Caki2 (cell line): ENCODE measurements at regions of chr11 and their contacts with region 1.

Region 1: DNA sequence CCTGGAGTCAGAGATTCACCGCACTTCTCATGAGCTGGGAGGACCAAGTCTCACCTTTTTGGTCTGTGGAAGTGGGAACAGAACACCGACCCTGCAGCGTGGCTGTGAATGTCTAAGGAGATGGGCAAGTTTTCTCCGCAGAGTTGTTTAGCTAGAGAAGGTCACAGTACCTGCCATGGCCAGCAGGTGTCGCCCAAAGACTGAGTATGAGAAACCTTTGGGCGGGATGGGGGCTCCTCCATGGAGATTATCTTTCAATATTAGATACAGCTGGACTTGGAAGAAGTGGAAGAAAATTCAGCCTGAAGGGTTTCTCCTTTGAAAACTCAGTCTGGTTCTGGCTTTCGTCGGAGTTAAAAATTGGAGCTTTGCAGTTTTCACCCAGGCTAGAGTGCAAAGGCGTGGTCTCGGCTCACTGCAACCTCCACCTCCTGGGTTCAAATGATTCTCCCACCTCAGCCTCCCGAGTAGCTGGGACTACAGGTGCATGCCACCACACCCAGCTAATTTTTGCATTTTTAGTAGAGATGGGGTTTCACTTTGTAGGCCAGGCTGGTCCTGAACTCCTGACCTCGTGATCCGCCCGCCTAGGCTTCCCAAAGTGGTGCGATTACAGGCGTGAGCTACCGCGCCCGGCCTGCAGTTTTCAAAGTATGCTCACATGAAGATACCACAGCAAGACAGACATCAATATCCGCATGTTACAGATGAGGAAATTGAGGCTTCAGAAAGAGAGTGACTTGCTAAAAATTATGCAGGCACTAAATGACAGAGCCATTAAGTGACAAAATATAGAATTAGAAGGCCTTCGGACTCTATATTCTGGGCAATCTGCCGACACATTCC is 10.7 kb upstream of the DSCAML1 start:
- DNase-seq: peak; percentile 49

Region 2: DNA sequence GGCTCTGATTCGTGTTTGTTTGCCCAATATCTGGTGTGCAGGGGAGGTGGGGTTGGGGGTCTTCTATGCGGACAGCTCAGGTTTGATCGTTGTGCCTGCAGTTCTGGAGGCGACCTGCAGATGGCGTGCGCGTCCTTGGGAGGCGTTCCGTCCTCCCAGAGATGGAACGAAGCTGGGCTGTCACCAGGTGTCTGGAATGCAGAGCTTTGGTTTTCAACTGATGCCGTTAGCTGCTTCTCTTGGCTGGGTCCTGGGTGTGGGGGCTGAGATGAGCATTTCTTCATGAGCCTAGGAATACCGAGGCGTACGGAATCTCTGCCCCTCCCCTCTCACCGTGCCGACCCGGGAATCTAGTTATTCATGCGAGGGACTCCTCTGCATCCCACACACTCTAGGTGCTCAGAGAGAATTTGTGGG is 381.4 kb before region 1 on chr11:
- in situ Hi-C with region 1: loop called (anchors 10 kb)
- DNase-seq: peak; percentile 38

Region 3: DNA sequence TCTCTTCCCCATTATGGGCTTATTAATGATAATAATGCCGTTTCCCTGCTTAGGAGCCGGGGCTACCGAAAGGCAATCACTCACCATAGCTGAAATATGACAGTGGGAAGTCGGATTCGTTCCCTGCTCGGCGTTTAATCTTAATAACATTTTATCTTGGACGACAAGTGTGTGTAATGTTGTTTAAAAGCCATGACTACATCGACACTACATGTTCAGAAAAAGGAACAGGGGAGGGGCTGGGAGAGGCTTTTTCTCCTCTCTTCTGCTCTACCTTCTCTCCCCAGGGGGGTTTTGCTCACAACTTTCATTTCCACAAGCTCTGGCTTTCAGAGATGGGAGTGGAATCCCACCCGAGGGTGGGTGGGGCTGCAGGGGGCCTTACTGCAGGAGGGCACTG is 116.2 kb before region 1 on chr11:
- in situ Hi-C with region 1: no loop called
- DNase-seq: no peak

Region 4: DNA sequence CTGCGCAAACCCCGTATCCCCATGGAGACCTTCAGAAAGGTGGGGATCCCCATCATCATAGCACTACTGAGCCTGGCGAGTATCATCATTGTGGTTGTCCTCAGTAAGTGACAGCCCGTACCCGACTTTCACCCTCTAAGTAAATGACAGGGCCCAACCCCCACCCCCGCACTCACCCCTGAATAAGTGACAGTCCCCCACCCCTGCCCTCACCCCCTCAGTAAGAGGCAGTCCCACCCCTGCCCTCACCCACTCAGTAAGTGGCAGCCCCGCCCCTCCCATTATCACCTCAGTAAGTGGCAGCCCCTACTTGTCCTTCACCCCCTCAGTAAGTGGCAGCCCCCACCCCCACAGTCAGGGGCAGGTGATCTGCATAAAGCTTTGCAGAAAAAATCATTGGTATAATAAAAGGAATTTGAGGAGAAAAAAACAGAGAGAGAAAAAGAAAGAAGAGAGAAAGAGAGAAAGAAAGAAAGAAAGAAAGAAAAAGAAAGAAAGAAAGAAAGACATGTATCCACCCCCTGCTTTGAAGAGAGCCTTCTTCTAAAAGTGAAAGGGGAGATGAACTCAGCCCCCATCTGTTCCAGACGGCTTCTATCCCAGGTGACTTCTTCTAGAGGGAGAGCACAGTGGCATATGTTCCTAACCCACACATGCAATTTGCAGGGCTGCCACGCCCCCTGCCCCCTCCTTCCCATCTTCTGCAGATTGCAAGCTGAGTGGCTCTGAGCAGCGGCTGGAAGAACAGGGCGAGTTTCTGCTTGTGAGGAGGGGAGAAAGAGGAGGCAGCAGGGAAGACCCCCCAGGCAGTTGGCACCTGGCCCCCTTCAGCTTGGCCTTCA is 291.5 kb after region 1 on chr11:
- in situ Hi-C with region 1: no loop called
- DNase-seq: no peak